ENCODE measurements at regions of chr2 and their contacts with region 1.

Region 1: GRCh38 chr2:110677530-110678456 is at the start of gene BUB1:
- DNase-seq: peak; percentile 95 to 99 (median 98)
- H3K4me3 ChIP-seq: peak within 1 kb of the TSS; percentile 55 to 99 (median 88)
- H3K27ac ChIP-seq: peak within 1 kb of the TSS; percentile 91 to 96
- H3K4me1 ChIP-seq: peaks cover 12 to 48% (median 26%) of the 10 kb centered on the region in 4 experiments
- H3K27me3 ChIP-seq: no peaks in the 10 kb centered on the region

Region 2: DNA sequence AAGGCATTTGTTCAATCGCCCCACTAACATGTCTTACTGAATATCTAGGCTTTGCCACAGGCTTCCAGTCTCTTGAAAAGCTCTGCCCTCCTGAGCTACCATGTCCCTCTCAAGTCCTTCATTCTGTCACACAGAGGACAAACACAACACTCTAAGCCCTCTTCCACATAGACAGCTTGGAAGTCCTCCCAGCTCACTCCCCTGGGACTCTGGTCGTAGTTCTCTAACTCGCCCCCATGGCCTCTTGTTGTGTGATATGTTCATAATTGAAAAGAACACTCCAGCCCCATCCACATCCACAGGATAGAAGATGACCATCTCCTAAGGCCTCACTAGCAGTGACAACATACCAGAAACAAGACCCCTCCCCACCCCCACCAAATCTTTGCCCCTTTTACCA is 37.8 kb before region 1 on chr2:
- CTCF ChIA-PET with region 1: no interaction called
- POLR2A ChIA-PET with region 1: no interaction called
- DNase-seq: no peak
- H3K4me3 ChIP-seq: no peak overlapping the region
- H3K27ac ChIP-seq: no peak overlapping the region
- H3K4me1 ChIP-seq: no peaks in the 10 kb centered on the region
- H3K27me3 ChIP-seq: no peaks in the 10 kb centered on the region

Region 3: DNA sequence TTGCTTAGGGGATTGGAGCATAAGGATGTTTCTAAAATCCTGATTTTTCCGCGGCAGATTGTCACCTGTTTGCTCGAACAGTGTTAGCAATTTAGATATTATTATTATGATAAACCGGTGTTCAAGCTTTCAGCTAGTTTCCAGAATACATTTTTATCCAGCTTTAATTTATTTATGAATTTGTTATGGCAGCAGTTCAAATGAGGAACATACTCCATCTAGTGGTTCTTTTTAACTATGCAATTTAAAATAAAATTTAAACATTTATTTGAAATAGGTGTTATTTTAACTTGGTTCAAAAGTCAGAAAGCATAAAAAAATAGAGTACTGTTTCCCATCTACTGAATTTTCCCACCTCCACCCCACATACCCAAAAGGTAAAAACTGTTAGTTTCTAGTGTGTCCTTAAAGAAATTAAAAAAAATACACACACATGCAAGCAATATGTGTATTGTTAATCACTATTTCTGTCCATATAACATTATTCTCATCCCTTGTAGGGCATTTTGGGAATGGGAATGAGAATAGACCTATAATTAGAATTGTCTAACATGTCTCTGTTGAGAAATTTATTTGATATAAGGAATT is 77.8 kb after region 1 on chr2:
- CTCF ChIA-PET with region 1: interaction called, 17 read pairs
- POLR2A ChIA-PET with region 1: interaction called, 3 read pairs
- DNase-seq: peak; percentile 14 to 41 (median 40)
- H3K4me3 ChIP-seq: no peak overlapping the region
- H3K27ac ChIP-seq: no peak overlapping the region
- H3K4me1 ChIP-seq: no peaks in the 10 kb centered on the region
- H3K27me3 ChIP-seq: no peaks in the 10 kb centered on the region